ENCODE measurements at regions of chr18 and their contacts with region 1.

Region 1: DNA sequence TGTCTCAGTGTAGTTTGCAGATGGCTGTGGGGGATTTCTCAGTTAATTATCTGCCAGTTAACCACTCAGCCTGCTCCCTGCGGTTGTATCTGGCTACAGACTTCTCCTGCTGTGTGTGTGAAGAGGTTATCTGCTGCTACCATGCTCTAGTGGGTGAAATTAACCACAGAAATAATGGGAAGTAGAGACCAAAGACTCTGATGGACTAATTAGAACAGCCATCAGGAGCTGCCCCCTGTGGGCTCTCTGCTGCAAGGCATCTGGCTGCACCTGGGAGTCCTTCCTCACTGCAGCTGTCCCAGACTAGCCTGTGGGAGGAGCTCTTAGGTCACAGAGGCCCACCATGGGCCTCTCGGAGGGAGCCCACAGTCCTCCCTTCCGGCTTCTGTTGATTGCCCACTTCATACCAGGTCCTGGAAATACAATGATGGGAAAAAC is 66.6 kb downstream of the CTIF start:
- DNase-seq: peak; percentile 65 to 78 (median 74)
- ATAC-seq: peak; percentile 99
- H3K4me3 ChIP-seq: no peak overlapping the region
- H3K27ac ChIP-seq: no peak overlapping the region
- H3K4me1 ChIP-seq: peaks cover 5 to 11% of the 10 kb centered on the region in 2 experiments; a peak in 3 of 5 replicates
- H3K27me3 ChIP-seq: no peaks in the 10 kb centered on the region
- CTCF ChIP-seq: peak; percentile 82 to 93 (median 91)
- EP300 ChIP-seq: peak; percentile 45; the same call in 1 of the 2 replicates
- POLR2A ChIP-seq: no peak
- RAD21 ChIP-seq: peak; percentile 66 to 80

Region 2: DNA sequence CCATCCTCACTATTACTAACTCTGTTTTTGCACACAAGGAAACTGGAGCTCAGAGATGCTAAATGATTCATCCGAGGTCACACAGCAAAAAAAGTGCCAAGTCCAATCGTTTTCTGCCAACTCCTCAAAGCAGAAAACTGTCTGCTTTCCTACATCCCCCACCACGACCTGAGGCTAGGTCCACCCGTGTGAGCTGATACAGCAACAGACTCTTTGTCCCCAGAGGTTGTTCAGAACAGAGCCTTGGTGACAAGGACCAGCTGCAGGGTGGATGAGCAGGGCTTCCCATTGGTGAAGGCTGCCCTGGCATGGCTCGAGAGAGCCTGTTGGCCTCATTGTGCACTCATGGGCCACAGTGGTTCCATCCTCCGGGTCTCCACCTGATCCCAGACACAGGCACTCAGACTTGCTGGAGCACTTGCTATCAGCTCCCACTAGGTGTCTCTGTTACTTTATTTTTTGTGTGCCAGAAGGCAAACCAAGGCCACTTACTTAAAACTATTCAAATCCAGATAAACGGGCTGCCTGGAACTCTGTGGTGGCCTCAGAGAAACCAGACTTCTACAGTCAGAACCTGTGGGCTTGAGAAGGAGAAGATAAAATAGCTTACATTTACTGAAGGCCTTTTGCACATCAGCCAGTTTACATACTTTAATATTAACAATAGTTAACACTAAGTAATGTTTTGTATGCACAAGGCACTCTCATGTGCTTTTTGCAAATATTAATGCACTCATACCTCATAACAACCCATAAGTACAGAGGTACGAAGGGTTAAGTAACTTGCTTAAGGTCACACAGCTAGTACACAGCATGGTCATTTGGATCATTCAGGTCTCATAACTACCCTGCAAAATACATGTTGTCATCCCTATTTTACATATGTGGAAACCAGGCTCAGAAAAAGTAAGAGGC is 129.5 kb before region 1 on chr18:
- CTCF ChIA-PET with region 1: interaction called, 9 read pairs
- POLR2A ChIA-PET with region 1: no interaction called
- in situ Hi-C with region 1: no loop called
- intact Hi-C with region 1: loop called (anchors 2 kb)
- DNase-seq: peak; percentile 37 to 64 (median 50)
- ATAC-seq: peak; percentile 94
- H3K4me3 ChIP-seq: no peak overlapping the region
- H3K27ac ChIP-seq: no peak overlapping the region
- H3K4me1 ChIP-seq: no peaks in the 10 kb centered on the region; a peak in 1 of 5 replicates
- H3K27me3 ChIP-seq: peaks cover 0 to 7% of the 10 kb centered on the region in 2 experiments; a peak in 2 of 5 replicates
- CTCF ChIP-seq: peak; percentile 71 to 87 (median 75)
- EP300 ChIP-seq: no peak
- POLR2A ChIP-seq: no peak
- RAD21 ChIP-seq: peak; percentile 85 to 89

Region 3: DNA sequence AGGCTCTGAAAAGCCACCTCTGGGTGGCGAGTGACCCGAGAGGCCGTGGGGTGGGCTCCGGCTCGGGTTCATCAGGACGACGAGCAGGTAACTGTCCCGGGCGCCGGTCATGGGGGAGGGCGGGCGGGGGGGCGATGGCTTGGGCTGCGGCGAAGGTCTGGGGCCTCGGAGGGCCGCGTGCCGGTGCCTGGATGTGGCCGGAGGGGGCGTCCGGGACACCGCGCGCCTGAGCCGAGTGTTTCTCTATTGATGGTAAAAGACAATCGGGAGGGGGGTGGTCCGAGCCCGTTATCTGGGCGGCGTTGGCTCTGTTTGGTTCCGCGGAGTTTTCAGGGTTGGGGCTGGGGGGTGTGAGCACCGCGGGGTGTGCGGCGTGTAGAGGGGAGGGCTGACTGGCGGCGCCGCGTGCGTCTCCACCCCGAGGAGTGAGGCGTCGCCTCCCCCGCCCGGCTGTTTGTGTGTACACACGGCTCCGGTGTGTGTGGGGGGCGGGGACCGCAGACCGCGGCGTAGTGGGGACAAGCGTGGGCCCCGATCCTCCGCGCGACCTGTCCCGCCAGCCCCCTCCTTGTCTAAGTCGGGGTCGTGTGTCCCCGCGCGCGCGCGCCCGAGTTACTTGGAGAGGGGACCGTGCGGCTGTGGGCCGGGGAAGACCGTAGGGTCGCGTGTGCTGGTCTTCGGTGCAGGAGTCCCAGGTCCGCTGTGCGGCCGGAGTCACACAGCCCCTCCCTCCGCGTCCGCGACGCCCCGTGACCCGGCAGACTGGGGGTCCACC is 65.0 kb before region 1 on chr18:
- CTCF ChIA-PET with region 1: no interaction called
- POLR2A ChIA-PET with region 1: no interaction called
- in situ Hi-C with region 1: no loop called
- intact Hi-C with region 1: loop called (anchors 10 kb)
- DNase-seq: peak; percentile 70 to 79 (median 72)
- ATAC-seq: peak; percentile 71
- H3K4me3 ChIP-seq: peak overlapping the region; percentile 62
- H3K27ac ChIP-seq: peak overlapping the region; percentile 83
- H3K4me1 ChIP-seq: peaks cover 31 to 44% of the 10 kb centered on the region in 2 experiments
- H3K27me3 ChIP-seq: no peaks in the 10 kb centered on the region
- CTCF ChIP-seq: 0 out of 6 replicates have a peak, but pooled peaks of 2 of the 3 experiments have one; percentile 5 to 21
- EP300 ChIP-seq: no peak
- POLR2A ChIP-seq: no peak
- RAD21 ChIP-seq: no peak

Region 4: DNA sequence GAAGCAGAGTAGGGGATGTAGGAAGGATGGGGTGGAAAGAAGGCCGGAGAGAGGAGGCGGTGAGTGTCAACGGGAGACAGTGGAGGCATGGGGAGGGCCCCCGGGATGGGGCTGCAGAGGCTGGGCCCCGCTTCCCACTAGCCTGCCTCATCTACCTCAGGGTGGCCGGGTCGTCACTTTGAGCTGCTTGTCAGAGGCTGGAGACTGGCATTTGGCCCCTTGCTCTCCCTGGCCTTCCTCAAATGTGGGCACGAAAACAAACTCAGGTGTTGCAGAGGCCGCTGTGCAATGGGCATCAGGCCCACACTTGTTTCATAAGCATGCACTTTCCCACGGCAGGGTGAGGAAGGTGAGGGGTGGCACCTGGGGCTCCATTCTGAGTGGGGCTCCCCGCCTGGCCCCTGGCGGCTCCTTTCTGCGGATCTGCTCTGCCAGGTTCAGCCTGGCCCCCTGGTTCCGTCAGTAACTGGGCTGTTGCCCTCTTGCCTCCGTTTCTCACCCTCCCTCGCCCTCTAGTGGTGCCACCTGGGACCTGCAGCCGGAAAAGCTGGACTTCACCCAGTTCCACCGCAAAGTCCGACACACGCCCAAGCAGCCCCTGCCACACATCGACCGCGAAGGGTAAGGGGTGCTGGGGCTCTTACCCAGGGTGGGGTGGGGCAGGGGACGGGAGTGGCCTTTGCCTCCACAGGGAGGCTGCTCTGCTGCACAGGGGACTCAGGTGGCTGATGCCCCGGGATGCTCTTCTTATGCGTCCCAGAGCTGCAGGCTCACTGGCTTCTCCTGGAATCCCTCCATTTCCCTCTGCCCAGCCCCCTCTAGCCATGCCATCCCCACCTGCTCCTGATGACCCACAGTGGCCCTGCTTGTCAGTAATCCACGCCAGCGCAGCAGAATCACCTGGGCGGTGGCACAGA is 58.8 kb after region 1 on chr18:
- CTCF ChIA-PET with region 1: no interaction called
- POLR2A ChIA-PET with region 1: no interaction called
- in situ Hi-C with region 1: no loop called
- intact Hi-C with region 1: loop called (anchors 5 kb)
- DNase-seq: peak; percentile 51 to 72 (median 67)
- ATAC-seq: peak; percentile 72
- H3K4me3 ChIP-seq: no peak overlapping the region
- H3K27ac ChIP-seq: no peak overlapping the region
- H3K4me1 ChIP-seq: peaks cover 0 to 13% of the 10 kb centered on the region in 2 experiments; a peak in 3 of 5 replicates
- H3K27me3 ChIP-seq: no peaks in the 10 kb centered on the region
- CTCF ChIP-seq: peak; percentile 65 to 71 (median 68)
- EP300 ChIP-seq: no peak
- POLR2A ChIP-seq: no peak
- RAD21 ChIP-seq: peak; percentile 31 to 74; a peak in 3 of 4 replicates